ENCODE measurements at regions of chr18 and their contacts with region 1.

Region 1: GRCh38 chr18:46281185-46282176 is 177.3 kb downstream of the HAUS1 start:
- DNase-seq: no peak

Region 2: DNA sequence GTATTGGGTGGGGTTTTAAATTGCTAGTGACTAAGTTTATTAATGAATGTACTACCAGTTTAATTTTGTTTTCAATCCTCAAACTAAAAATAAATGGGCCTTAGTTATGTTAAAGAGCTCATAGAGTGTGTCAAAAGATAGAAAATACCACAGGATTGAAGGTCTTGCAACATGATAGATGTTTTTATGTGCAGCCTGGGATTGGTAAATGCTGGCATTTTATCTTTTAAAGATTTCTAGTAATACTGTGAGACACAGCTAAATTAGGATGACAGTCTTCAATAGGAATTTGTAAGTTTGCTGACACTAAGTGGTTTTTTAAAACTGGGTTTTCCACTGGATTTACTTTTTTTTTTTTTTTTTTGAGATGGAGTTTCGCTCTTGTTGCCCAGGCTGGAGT is 55.0 kb before region 1 on chr18:
- intact Hi-C with region 1: no loop called
- DNase-seq: no peak

Region 3: GRCh38 chr18:46481048-46481846 is 199.8 kb after region 1 on chr18:
- intact Hi-C with region 1: loop called (anchors 5 kb)
- DNase-seq: no peak

Region 4: DNA sequence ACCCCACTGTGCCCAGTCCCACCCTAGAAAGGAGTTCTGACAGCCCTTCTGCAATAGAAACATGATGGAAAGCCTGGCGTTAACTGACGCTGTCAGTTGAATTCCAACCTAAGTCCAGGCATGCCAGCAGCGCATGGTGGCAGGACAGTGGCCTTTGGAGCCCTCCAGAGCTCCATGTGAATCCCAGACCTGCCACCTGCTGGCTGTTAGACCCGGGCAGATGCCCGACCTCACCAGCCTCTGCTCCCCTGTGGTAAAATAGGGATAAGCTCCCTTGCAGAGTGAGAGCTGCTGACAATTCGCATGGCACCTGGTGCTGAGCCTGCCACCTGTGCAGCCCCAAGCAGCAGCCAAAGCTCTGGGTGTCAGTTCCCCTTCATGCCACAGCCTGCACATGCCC is 237.0 kb after region 1 on chr18:
- intact Hi-C with region 1: loop called (anchors 1 kb)
- DNase-seq: no peak